A549 (cell line): ENCODE measurements at regions of chr11 and their contacts with region 1.

Region 1: GRCh38 chr11:69131644-69132300 is 24.0 kb upstream of the SMIM38 start:
- DNase-seq: peak; percentile 68 to 86
- ATAC-seq: peak; percentile 88 to 94
- H3K4me3 ChIP-seq: no peak overlapping the region
- H3K27ac ChIP-seq: peak overlapping the region; percentile 63 to 75
- H3K4me1 ChIP-seq: peaks cover 15% of the 10 kb centered on the region
- CTCF ChIP-seq: peak; percentile 88
- EP300 ChIP-seq: no peak
- POLR2A ChIP-seq: no peak
- RAD21 ChIP-seq: peak; percentile 88 to 90

Region 2: GRCh38 chr11:69145062-69145405 is 13.3 kb after region 1 on chr11:
- CTCF ChIA-PET with region 1: interaction called, 23 read pairs
- POLR2A ChIA-PET with region 1: no interaction called
- DNase-seq: no peak
- ATAC-seq: no peak
- H3K4me3 ChIP-seq: no peak overlapping the region
- H3K27ac ChIP-seq: no peak overlapping the region
- H3K4me1 ChIP-seq: no peaks in the 10 kb centered on the region
- CTCF ChIP-seq: no peak
- EP300 ChIP-seq: no peak
- POLR2A ChIP-seq: no peak
- RAD21 ChIP-seq: no peak

Region 3: GRCh38 chr11:69156673-69157155 is 24.9 kb after region 1 on chr11:
- CTCF ChIA-PET with region 1: interaction called, 21 read pairs
- POLR2A ChIA-PET with region 1: no interaction called
- DNase-seq: no peak
- ATAC-seq: peak in 1 of 2 experiments; percentile 42; a peak in 3 of 6 replicates
- H3K4me3 ChIP-seq: no peak overlapping the region
- H3K27ac ChIP-seq: peak overlapping the region in 1 of 2 experiments; percentile 55; a peak in 4 of 6 replicates
- H3K4me1 ChIP-seq: peaks cover 10% of the 10 kb centered on the region; the same call in 2 of the 3 replicates
- CTCF ChIP-seq: no peak
- EP300 ChIP-seq: no peak
- POLR2A ChIP-seq: no peak
- RAD21 ChIP-seq: no peak

Region 4: GRCh38 chr11:69296890-69297786 is 165.4 kb after region 1 on chr11:
- CTCF ChIA-PET with region 1: interaction called, 55 read pairs
- POLR2A ChIA-PET with region 1: interaction called, 7 read pairs
- DNase-seq: peak; percentile 93 to 97
- ATAC-seq: peak; percentile 15 to 34
- H3K4me3 ChIP-seq: peak overlapping the region; percentile 69
- H3K27ac ChIP-seq: peak overlapping the region; percentile 93 to 98
- H3K4me1 ChIP-seq: peaks cover 75% of the 10 kb centered on the region
- CTCF ChIP-seq: no peak
- EP300 ChIP-seq: peak; percentile 87 to 95; a peak in 4 of 5 replicates
- POLR2A ChIP-seq: no peak
- RAD21 ChIP-seq: peak; percentile 1 to 66; a peak in 3 of 5 replicates

Region 5: GRCh38 chr11:69654569-69655327 is 523.0 kb after region 1 on chr11:
- CTCF ChIA-PET with region 1: interaction called, 12 read pairs
- POLR2A ChIA-PET with region 1: no interaction called
- DNase-seq: peak; percentile 88 to 95
- ATAC-seq: peak; percentile 66 to 75
- H3K4me3 ChIP-seq: peak overlapping the region; percentile 33
- H3K27ac ChIP-seq: peak overlapping the region; percentile 87 to 90
- H3K4me1 ChIP-seq: peaks cover 64% of the 10 kb centered on the region
- CTCF ChIP-seq: no peak
- EP300 ChIP-seq: peak; percentile 85 to 90; a peak in 4 of 5 replicates
- POLR2A ChIP-seq: no peak; the same call in 1 of the 2 replicates
- RAD21 ChIP-seq: peak; percentile 40 to 49; a peak in 4 of 5 replicates

Region 6: DNA sequence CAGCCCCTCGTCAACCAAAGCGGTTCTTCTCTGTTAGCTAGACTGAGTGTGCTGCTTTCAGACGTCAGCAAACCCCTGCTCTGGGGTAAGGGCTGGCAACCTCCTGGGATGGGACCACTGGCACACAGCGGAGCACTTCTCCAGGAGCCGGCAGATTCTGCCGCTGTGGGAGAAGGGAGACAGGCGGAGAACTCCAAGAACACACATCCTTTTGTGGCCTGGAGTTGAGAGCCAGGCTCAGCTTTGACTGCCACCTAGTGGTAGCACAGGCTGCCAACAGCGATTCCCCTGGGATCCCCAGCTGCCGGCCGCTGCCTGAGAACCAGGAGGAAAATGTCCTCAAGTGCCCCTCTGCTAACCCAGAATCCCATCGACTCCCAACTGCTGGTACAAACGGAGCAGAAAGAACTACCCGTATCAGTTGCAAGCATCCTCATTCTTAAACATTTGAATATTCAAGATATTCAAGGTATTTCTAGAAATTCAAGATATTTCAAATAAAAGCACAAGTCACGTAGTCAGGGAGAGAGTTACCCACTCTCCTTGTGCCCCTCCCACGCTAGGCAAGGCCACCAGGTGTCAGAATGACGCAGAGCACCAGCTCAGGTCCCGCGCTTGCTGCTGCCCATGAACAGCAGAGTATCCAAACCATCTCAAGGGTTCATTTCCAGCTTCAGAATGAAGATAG is 538.5 kb after region 1 on chr11:
- CTCF ChIA-PET with region 1: interaction called, 14 read pairs
- POLR2A ChIA-PET with region 1: interaction called, 3 read pairs
- DNase-seq: peak; percentile 87 to 90
- ATAC-seq: peak; percentile 80 to 81
- H3K4me3 ChIP-seq: no peak overlapping the region
- H3K27ac ChIP-seq: peak overlapping the region; percentile 49 to 72; a peak in 4 of 6 replicates
- H3K4me1 ChIP-seq: peaks cover 24% of the 10 kb centered on the region
- CTCF ChIP-seq: peak; percentile 93
- EP300 ChIP-seq: no peak
- POLR2A ChIP-seq: no peak
- RAD21 ChIP-seq: peak; percentile 92